ENCODE measurements at regions of chr5 and their contacts with region 1.

Region 1: GRCh38 chr5:175534070-175534932 is 55.9 kb downstream of the SFXN1 start:
- DNase-seq: peak; percentile 74 to 92 (median 82)
- ATAC-seq: peak; percentile 100
- H3K4me3 ChIP-seq: peak overlapping the region; percentile 22
- H3K4me3 Mint-ChIP-seq: peak overlapping the region; percentile 75
- H3K27ac ChIP-seq: no peak overlapping the region
- H3K27ac Mint-ChIP-seq: no peak overlapping the region
- H3K4me1 ChIP-seq: peaks cover 16% of the 10 kb centered on the region
- H3K4me1 Mint-ChIP-seq: peaks cover 28% of the 10 kb centered on the region
- H3K27me3 ChIP-seq: no peaks in the 10 kb centered on the region
- H3K27me3 Mint-ChIP-seq: no peaks in the 10 kb centered on the region
- CTCF ChIP-seq: peak; percentile 100

Region 2: DNA sequence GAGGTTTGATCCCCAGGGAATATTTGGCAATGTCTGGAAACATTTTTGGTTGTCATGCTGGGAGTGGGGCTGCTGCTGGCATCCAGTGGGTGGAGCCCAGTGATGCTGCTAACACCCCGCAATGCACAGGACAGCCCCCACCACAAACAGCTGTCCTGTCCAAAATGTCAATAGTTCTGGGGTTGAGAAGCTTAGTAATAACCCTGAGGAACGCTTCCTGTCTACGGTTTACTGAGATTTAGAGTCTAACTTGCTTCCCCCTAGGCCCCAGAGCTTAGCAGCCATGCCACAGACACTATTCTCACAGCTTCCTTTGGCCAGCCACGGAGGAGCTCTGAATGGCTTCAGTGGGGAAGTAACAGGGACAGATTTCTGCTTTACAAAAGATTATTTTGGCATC is 743.4 kb before region 1 on chr5:
- CTCF ChIA-PET with region 1: no interaction called
- POLR2A ChIA-PET with region 1: no interaction called
- intact Hi-C with region 1: no loop called
- DNase-seq: no peak
- ATAC-seq: no peak
- H3K4me3 ChIP-seq: no peak overlapping the region
- H3K4me3 Mint-ChIP-seq: no peak overlapping the region
- H3K27ac ChIP-seq: no peak overlapping the region
- H3K27ac Mint-ChIP-seq: no peak overlapping the region
- H3K4me1 ChIP-seq: peaks cover 4% of the 10 kb centered on the region
- H3K4me1 Mint-ChIP-seq: no peaks in the 10 kb centered on the region
- H3K27me3 ChIP-seq: peaks cover 7 to 25% of the 10 kb centered on the region in 2 experiments
- H3K27me3 Mint-ChIP-seq: peaks cover 62% of the 10 kb centered on the region
- CTCF ChIP-seq: no peak

Region 3: DNA sequence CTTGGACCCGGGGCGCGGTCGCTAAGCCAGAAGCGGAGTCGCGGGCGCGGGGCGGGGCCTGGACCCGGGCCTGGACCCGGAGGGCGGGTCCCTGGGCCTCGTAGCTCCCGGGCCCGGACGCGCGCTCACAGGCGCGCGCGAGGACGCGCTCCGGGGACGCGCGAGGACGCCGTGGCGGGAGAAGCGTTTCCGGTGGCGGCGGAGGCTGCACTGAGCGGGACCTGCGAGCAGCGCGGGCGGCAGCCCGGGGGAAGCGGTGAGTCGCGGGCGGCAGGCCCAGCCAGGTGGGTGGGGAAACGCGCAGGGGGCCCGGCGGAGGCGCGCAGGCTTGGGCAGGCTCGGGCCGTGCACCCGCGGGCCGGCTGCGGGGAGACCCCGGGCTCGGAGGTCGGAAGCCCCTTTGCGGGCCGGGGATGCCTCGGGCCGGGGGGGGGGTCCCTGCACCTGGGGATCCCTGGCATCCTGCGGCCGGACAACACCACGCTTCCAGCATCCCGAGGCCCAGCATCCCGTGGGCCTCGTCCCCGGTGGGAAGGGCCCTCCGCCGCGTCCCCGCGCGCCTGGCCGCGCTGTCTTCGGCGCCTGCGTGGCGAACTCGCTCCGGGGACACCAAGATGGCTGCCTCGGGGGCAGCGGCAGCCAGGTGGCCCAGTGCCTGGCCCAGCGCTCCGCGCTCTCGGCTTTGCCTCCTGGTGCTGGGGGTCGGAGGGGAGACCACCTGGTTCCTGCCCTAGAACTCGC is 55.7 kb before region 1 on chr5 and contains the start of gene SFXN1:
- CTCF ChIA-PET with region 1: interaction called, 12 read pairs
- POLR2A ChIA-PET with region 1: interaction called, 5 read pairs
- intact Hi-C with region 1: no loop called
- DNase-seq: peak; percentile 51 to 88 (median 74)
- ATAC-seq: peak; percentile 40
- H3K4me3 ChIP-seq: peak within 1 kb of the TSS; percentile 84
- H3K4me3 Mint-ChIP-seq: peak within 1 kb of the TSS; percentile 98
- H3K27ac ChIP-seq: peak within 1 kb of the TSS; percentile 48 to 60
- H3K27ac Mint-ChIP-seq: peak within 1 kb of the TSS; percentile 92
- H3K4me1 ChIP-seq: peaks cover 41% of the 10 kb centered on the region
- H3K4me1 Mint-ChIP-seq: peaks cover 57% of the 10 kb centered on the region
- H3K27me3 ChIP-seq: no peaks in the 10 kb centered on the region
- H3K27me3 Mint-ChIP-seq: peaks cover 9% of the 10 kb centered on the region
- CTCF ChIP-seq: no peak
- total RNA-seq, gene SFXN1: 133 to 138 TPM

Region 4: GRCh38 chr5:175517818-175518450 is 16.4 kb before region 1 on chr5:
- CTCF ChIA-PET with region 1: interaction called, 31 read pairs
- POLR2A ChIA-PET with region 1: interaction called, 9 read pairs
- intact Hi-C with region 1: no loop called
- DNase-seq: peak in 12 of 14 experiments; percentile 22 to 73 (median 54)
- ATAC-seq: peak; percentile 24
- H3K4me3 ChIP-seq: no peak overlapping the region
- H3K4me3 Mint-ChIP-seq: peak overlapping the region; percentile 46
- H3K27ac ChIP-seq: peak overlapping the region; percentile 31 to 58
- H3K27ac Mint-ChIP-seq: peak overlapping the region; percentile 84
- H3K4me1 ChIP-seq: peaks cover 42% of the 10 kb centered on the region
- H3K4me1 Mint-ChIP-seq: peaks cover 82% of the 10 kb centered on the region
- H3K27me3 ChIP-seq: no peaks in the 10 kb centered on the region
- H3K27me3 Mint-ChIP-seq: no peaks in the 10 kb centered on the region
- CTCF ChIP-seq: no peak

Region 5: DNA sequence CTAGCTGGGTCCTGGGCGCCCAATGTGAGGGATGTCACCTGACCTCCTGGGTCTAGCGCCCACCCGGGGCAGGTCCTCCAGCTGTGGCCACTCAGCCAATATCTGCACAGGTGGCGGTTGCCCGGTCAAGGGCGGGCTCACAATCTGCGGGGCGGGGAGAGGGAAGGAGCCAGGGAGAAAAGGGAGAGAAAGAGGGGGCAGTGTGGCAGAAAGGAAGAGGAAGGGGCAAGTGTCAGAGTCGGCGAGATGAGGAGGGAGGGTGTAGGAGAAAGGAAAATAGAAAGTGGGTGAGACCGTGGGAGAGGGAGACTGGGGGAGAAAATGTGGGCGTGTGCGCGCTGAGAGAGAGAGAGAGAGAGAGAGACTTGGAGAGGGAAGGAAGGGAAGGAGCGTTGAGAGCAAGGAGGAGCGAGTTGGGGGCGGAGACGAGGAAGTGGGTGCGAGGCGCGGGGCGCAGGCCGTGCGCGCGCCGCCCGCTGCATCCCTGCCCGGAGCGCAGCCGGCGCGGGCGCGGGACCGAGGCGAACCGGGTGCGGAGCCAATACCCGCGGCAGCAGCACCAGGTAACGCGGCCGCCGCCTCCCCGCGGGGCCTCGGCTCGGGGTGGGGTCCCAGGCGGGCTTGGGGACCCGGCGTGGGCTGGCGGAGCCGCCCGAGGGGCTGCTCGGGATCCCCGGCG is 123.4 kb after region 1 on chr5 and contains the start of gene HRH2:
- CTCF ChIA-PET with region 1: interaction called, 10 read pairs
- POLR2A ChIA-PET with region 1: interaction called, 4 read pairs
- intact Hi-C with region 1: loop called (anchors 1 to 2 kb)
- DNase-seq: peak in 13 of 14 experiments; percentile 14 to 73 (median 41)
- ATAC-seq: peak; percentile 55
- H3K4me3 ChIP-seq: peak within 1 kb of the TSS; percentile 92
- H3K4me3 Mint-ChIP-seq: peak within 1 kb of the TSS; percentile 97
- H3K27ac ChIP-seq: no peak within 1 kb of the TSS
- H3K27ac Mint-ChIP-seq: peak within 1 kb of the TSS; percentile 75
- H3K4me1 ChIP-seq: peaks cover 74% of the 10 kb centered on the region
- H3K4me1 Mint-ChIP-seq: peaks cover 95% of the 10 kb centered on the region
- H3K27me3 ChIP-seq: no peaks in the 10 kb centered on the region
- H3K27me3 Mint-ChIP-seq: no peaks in the 10 kb centered on the region
- CTCF ChIP-seq: no peak
- total RNA-seq, gene HRH2: 2.9 to 3.4 TPM

Region 6: DNA sequence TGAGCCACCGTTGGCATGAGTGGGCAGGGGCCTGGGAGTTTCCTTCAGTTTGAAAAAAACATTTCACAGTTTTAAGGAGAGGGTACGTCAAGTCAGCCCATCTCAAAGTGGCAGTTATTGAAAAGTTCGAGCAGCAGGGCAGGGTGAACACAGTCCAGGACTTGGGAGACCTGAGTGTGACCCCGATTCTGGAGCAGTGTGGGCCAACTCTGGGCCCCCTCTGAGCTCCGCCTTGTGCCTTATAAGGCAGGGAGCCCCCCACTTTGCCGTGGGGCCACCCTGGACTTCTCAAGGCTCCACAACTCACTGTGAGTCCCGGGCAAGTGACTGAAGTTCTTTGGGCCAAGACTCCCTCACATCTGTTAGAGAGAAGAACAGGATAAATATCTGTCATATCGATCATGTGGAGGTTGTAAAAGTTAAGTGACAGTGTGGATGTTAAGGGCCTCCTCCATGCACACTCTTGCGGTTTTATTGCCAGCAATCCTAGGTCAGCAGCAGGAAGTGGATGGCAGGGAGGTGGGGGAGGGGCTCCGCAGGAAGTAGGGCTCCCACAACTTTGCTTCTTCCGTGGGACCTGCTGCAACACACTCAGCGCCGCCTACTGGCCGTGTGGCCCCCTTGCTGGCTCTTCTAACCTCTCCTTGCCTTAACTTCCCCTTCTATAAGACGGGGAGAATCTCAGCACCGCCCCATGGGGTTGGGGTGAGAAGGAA is 162.0 kb after region 1 on chr5:
- CTCF ChIA-PET with region 1: interaction called, 31 read pairs
- POLR2A ChIA-PET with region 1: interaction called, 8 read pairs
- intact Hi-C with region 1: loop called (anchors 1 kb)
- DNase-seq: peak; percentile 50 to 87 (median 70)
- ATAC-seq: peak; percentile 80
- H3K4me3 ChIP-seq: no peak overlapping the region
- H3K4me3 Mint-ChIP-seq: peak overlapping the region; percentile 18
- H3K27ac ChIP-seq: peak overlapping the region in 1 of 2 donors; percentile 13
- H3K27ac Mint-ChIP-seq: peak overlapping the region; percentile 61
- H3K4me1 ChIP-seq: peaks cover 28% of the 10 kb centered on the region
- H3K4me1 Mint-ChIP-seq: peaks cover 53% of the 10 kb centered on the region
- H3K27me3 ChIP-seq: no peaks in the 10 kb centered on the region
- H3K27me3 Mint-ChIP-seq: no peaks in the 10 kb centered on the region
- CTCF ChIP-seq: peak; percentile 88

Region 7: DNA sequence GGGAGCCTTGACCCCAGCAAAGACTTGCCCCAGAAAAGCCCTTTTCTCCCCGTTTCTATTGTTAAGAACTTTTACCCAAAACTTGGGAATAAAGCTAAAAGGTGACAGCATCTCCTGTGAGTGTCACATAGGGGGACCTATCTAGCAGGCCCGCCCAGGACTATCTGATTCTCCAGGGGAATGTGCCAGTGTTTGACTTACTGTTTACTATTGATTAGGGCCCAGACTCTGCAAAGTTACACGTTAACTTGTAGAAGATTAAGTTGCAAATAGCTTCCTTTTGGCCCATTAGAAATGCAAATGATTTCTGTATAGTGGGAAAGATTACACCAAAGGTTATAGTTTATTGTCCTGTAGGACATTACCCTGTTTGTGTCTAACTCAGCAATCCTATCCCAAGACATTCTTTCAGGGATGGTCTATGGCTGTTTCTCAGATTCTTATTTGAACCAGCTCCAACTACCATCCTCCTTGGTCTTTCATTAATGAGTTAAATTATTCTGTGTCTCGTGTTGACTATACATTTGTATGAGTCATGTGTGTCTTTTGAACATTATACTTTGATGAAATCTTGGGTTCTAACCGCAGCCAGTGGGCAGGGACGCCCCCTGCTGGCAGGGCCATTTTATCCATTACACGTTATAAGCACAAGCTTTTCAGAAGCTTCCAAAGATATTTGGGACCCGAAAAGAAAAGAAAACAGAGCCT is 184.3 kb after region 1 on chr5:
- CTCF ChIA-PET with region 1: interaction called, 28 read pairs
- POLR2A ChIA-PET with region 1: interaction called, 8 read pairs
- intact Hi-C with region 1: loop called (anchors 1 kb)
- DNase-seq: peak; percentile 20 to 82 (median 52)
- ATAC-seq: no peak
- H3K4me3 ChIP-seq: no peak overlapping the region
- H3K4me3 Mint-ChIP-seq: no peak overlapping the region
- H3K27ac ChIP-seq: no peak overlapping the region
- H3K27ac Mint-ChIP-seq: no peak overlapping the region
- H3K4me1 ChIP-seq: no peaks in the 10 kb centered on the region
- H3K4me1 Mint-ChIP-seq: peaks cover 6% of the 10 kb centered on the region
- H3K27me3 ChIP-seq: no peaks in the 10 kb centered on the region
- H3K27me3 Mint-ChIP-seq: no peaks in the 10 kb centered on the region
- CTCF ChIP-seq: peak; percentile 75

Region 8: GRCh38 chr5:175729829-175730277 is 195.6 kb after region 1 on chr5:
- CTCF ChIA-PET with region 1: interaction called, 17 read pairs
- POLR2A ChIA-PET with region 1: no interaction called
- intact Hi-C with region 1: no loop called
- DNase-seq: peak; percentile 85 to 96 (median 92)
- ATAC-seq: peak; percentile 98
- H3K4me3 ChIP-seq: no peak overlapping the region
- H3K4me3 Mint-ChIP-seq: no peak overlapping the region
- H3K27ac ChIP-seq: no peak overlapping the region
- H3K27ac Mint-ChIP-seq: no peak overlapping the region
- H3K4me1 ChIP-seq: peaks cover 8% of the 10 kb centered on the region
- H3K4me1 Mint-ChIP-seq: peaks cover 7% of the 10 kb centered on the region
- H3K27me3 ChIP-seq: peaks cover 10% of the 10 kb centered on the region in 2 experiments
- H3K27me3 Mint-ChIP-seq: peaks cover 31% of the 10 kb centered on the region
- CTCF ChIP-seq: peak; percentile 93

Region 9: DNA sequence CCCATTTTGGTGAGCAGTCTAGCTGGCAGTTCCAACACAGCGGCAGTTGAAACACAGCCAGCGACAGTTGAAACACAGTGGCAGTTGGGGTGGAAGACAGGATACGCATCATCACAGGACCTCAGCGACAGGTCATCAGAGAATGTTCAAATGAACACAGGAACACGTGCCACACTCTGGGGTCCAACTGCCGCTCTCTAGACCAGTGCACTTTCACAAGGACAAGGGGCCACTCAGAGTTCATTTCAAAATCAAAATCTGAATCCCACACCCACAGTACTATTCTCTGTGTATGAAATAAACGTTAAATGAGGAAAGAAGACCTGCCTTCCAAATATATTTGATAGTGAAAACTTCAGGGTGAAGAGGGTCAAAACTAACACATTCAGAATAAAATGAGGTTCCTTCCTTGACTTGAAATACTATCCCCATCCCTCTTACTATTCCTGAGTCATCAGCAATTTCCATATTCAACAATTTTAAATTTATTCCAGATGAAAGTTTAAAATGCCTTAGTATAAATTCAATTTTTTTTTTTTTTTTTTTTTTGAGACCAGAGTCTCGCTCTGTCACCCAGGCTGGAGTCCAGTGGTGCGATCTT is 650.9 kb after region 1 on chr5:
- CTCF ChIA-PET with region 1: no interaction called
- POLR2A ChIA-PET with region 1: no interaction called
- intact Hi-C with region 1: no loop called
- DNase-seq: no peak
- ATAC-seq: no peak
- H3K4me3 ChIP-seq: no peak overlapping the region
- H3K4me3 Mint-ChIP-seq: no peak overlapping the region
- H3K27ac ChIP-seq: no peak overlapping the region
- H3K27ac Mint-ChIP-seq: no peak overlapping the region
- H3K4me1 ChIP-seq: no peaks in the 10 kb centered on the region
- H3K4me1 Mint-ChIP-seq: no peaks in the 10 kb centered on the region
- H3K27me3 ChIP-seq: no peaks in the 10 kb centered on the region
- H3K27me3 Mint-ChIP-seq: peaks cover 27% of the 10 kb centered on the region
- CTCF ChIP-seq: no peak